ENCODE measurements at regions of chr16 and their contacts with region 1.

Region 1: DNA sequence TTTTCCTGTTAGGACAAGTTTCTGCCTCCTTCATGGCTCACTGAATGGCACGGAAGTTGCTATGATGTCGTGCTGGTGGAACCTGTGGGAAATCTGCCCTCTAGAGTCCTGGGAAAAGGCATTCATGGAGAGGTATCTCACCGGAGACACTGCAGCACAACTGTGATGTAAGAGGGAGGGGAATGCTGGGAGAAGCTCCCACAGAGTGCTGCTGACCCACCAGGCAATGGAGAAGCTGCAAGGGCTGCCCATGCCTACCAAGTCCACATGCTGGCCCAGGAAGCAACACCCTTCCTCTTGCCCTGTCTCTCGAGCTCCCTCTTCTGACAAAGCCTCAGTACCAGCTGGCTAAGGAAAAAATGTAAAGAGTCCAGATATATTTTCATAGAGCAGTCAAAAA is 45.2 kb upstream of the SLC5A11 start:
- DNase-seq: peak; percentile 53
- H3K27ac ChIP-seq: peak overlapping the region; percentile 21; the same call in 1 of the 2 replicates
- CTCF ChIP-seq: peak; percentile 22; the same call in 1 of the 2 replicates

Region 2: DNA sequence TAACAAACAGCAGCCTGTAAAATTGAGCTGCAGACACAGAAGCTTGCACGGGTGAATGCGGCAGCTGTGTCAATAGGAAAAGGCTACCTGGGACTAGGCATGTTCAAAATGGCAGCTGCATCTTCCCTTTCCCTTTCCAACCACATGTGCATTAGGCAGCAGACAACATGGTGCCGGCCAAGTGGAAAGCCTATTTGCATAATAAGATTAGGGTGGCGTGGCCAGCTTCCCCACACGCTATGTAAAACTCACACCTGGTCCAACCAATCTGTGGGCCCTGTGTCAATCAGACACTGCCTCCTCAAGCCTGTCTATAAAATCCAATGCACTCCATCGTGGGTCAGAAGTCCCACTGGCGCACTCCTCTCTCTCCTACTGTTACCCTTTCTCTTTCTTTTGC is 322.2 kb before region 1 on chr16:
- CTCF ChIA-PET with region 1: no interaction called
- POLR2A ChIA-PET with region 1: no interaction called
- DNase-seq: no peak
- H3K27ac ChIP-seq: no peak overlapping the region
- CTCF ChIP-seq: no peak

Region 3: GRCh38 chr16:24580665-24581064 is 219.9 kb before region 1 on chr16:
- CTCF ChIA-PET with region 1: interaction called, 16 read pairs
- POLR2A ChIA-PET with region 1: no interaction called
- DNase-seq: peak; percentile 27
- H3K27ac ChIP-seq: no peak overlapping the region
- CTCF ChIP-seq: peak; percentile 24; the same call in 1 of the 2 replicates

Region 4: GRCh38 chr16:24652209-24652712 is 148.3 kb before region 1 on chr16:
- CTCF ChIA-PET with region 1: no interaction called
- POLR2A ChIA-PET with region 1: no interaction called
- DNase-seq: no peak
- H3K27ac ChIP-seq: no peak overlapping the region
- CTCF ChIP-seq: no peak

Measured in RWPE1 (cell line).